Activated CD4-positive, alpha-beta T cell treated with anti-CD3 and anti-CD28 coated beads for 36 hours (primary cell): ENCODE measurements at regions of chr7 and their contacts with region 1.

Region 1: DNA sequence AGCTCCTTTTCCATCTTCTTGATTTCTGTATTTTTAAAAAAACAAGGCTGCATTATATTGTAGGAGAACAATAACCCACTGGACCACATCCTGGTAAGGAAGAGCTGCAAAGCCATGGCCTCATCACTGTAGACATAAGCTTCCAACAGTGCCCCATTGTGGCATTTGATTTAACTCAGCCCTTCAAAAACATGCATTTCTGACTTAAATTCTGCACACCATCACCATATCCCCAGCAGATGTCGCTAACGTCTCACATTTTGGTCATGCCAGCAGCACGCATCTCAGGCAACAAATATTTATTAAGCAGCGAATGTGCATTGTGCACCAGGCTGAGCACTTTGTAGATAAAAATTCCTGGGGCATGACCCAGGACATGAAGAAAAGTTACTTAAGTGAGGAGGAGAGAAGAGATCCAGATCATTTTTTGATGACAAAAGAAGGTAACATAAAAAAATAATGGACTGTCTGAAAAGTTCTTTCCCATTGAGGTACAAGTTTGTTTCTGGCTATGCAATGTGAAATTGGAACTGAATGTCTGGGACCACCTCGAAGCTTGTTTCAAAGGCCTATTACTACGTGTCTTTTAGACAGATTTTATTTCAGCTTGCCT is 164.6 kb upstream of the CDCA7L start:
- DNase-seq: peak; percentile 78
- ATAC-seq: peak; percentile 93
- H3K4me3 Mint-ChIP-seq: no peak overlapping the region
- H3K27ac Mint-ChIP-seq: no peak overlapping the region
- H3K4me1 Mint-ChIP-seq: no peaks in the 10 kb centered on the region
- H3K27me3 Mint-ChIP-seq: peaks cover 3% of the 10 kb centered on the region

Region 2: DNA sequence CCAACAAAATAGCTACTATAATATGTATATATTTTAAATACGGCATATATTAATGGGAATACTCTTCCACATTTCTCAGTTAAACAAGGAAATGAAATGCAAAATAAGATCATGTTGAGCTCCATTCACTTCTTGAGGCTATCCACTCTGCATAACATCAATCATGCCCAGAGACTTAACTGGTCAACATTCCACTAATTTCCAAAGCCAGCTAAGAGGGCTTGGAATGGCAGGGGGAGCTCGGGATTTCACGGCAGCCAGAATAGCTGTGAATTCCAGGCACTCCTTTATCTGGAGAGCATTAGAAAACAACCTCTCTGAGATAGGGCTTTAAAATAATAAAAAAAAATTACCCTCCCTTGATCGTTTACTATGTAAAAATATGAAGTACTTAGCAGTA is 30.2 kb after region 1 on chr7:
- CTCF ChIA-PET with region 1: interaction called, 10 read pairs
- POLR2A ChIA-PET with region 1: no interaction called
- intact Hi-C with region 1: no loop called
- DNase-seq: no peak
- ATAC-seq: no peak
- H3K4me3 Mint-ChIP-seq: no peak overlapping the region
- H3K27ac Mint-ChIP-seq: no peak overlapping the region
- H3K4me1 Mint-ChIP-seq: no peaks in the 10 kb centered on the region
- H3K27me3 Mint-ChIP-seq: peaks cover 3% of the 10 kb centered on the region

Region 3: DNA sequence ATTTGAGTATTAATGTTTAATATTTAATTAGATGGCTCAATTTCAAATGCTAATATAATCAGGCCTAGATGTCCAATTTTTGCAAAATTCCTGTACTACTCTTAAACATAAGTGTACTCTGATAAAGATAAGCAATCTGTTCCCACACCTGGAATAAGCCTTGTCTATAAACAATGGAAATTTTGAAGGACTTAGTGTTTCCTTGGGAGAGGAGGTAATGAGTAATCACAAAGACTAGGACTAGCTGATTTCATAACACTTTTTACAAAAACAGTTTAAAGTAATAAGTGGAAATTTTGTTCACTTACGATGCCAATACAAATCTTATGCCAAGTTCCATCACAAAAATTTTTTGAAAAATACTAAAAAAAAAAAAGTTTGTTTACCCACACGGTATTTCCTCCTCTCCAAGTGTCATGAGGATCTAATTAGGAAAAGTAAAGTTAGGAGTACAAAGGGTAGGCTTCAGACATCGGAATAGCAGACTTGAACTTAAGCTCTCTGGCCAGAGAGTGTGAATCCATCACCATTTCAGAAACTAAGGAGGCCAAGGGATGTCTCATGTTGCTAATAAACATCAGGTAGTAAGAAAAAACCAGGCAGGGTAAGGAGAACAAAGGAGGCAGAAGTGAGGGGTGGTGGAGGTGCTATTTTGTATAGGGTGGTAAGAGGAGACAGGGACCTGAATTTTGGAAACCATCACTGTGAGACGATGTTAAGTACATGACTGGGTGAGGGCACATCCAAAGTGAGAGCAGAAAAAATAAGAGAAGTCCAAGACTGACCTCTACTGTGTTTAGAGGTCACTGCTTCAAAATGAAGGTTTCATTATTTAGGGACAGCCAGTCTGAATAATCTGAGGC is 185.3 kb after region 1 on chr7:
- CTCF ChIA-PET with region 1: interaction called, 5 read pairs
- POLR2A ChIA-PET with region 1: no interaction called
- intact Hi-C with region 1: loop called (anchors 10 kb)
- DNase-seq: no peak
- ATAC-seq: no peak
- H3K4me3 Mint-ChIP-seq: no peak overlapping the region
- H3K27ac Mint-ChIP-seq: no peak overlapping the region
- H3K4me1 Mint-ChIP-seq: peaks cover 9% of the 10 kb centered on the region
- H3K27me3 Mint-ChIP-seq: peaks cover 4% of the 10 kb centered on the region

Region 4: GRCh38 chr7:22445140-22445743 is 334.9 kb after region 1 on chr7:
- CTCF ChIA-PET with region 1: interaction called, 10 read pairs
- POLR2A ChIA-PET with region 1: no interaction called
- intact Hi-C with region 1: no loop called
- DNase-seq: peak; percentile 10
- ATAC-seq: no peak
- H3K4me3 Mint-ChIP-seq: no peak overlapping the region
- H3K27ac Mint-ChIP-seq: no peak overlapping the region
- H3K4me1 Mint-ChIP-seq: peaks cover 18% of the 10 kb centered on the region
- H3K27me3 Mint-ChIP-seq: peaks cover 18% of the 10 kb centered on the region

Region 5: DNA sequence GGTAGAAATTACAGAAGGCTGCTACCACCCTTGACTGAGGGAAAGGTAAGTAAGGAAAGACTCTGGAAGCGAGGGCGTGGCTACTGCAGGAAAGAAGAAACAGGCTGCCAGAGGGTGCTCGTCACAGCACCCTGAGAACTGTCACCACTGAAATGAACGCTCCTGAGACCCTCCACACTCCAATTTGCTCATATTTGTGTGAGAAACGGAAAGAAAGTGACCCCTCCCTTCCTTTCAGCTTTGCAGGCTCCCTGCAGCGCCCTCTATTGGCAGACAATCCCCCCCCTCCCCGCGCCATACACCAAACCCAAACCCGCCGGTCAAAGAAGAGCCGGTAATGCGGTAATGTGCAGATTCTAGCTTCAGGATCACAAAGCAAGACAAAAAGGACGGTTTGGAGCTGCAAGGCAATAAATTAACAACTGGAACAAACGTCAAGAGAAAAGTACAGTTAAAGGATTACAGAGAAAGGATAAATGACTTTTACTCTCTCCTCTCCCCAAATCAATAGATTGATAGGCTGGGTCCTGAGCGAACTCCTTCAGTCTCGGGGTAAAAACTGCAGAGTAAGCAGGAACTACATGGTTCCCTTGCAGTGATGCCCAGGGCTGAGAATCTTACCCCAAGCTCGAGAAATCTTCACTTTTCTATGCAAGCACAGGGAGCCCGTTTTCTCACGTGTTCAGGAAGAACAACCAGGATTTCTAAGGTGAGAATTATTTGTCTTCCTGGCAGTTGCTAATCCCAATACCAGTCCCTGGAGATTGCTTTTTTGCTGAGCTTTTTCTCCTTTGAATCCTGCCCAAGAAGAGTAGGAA is 342.0 kb after region 1 on chr7:
- CTCF ChIA-PET with region 1: interaction called, 14 read pairs
- POLR2A ChIA-PET with region 1: no interaction called
- intact Hi-C with region 1: no loop called
- DNase-seq: peak; percentile 79
- ATAC-seq: no peak
- H3K4me3 Mint-ChIP-seq: no peak overlapping the region
- H3K27ac Mint-ChIP-seq: no peak overlapping the region
- H3K4me1 Mint-ChIP-seq: peaks cover 5% of the 10 kb centered on the region
- H3K27me3 Mint-ChIP-seq: peaks cover 41% of the 10 kb centered on the region

Region 6: DNA sequence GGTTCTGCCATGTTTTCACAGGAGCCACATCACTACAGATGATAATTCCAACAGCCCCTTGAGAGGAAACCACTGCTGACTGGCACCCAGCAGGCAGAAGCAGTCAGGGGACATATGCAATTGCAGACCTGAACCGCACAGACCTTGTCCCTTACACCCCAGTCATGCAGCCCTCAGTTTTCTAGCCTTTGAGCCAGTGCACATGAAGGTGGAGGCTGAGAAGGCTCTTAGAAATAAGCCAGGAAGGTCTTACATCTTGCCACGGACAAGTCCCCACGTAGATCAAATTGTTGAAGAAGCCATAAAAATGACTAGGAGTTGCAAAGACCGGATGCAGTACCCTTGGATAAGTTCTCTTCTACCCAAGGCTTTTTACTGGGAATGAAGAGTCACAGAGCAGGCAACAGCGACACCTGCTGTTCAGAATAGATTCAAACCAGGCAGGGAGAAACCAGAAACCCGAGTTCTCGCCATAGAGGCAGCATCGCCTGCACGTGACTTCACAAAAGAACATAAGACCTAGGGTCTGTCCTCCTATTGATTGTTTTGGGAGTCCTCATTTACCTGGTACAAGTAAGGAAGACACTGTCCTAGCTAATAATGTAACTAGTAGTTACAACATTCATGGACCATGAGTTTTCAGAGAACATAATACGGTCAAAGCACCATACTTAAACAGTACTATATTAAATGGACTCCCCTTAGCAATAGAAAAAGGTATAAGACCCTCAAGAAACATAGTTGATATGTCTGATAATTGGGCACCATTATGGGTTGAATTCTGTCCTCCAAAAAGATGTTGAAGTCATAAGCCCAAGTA is 378.5 kb after region 1 on chr7:
- CTCF ChIA-PET with region 1: interaction called, 36 read pairs
- POLR2A ChIA-PET with region 1: no interaction called
- intact Hi-C with region 1: loop called (anchors 1 kb)
- DNase-seq: peak; percentile 79
- ATAC-seq: peak; percentile 69
- H3K4me3 Mint-ChIP-seq: no peak overlapping the region
- H3K27ac Mint-ChIP-seq: no peak overlapping the region
- H3K4me1 Mint-ChIP-seq: no peaks in the 10 kb centered on the region
- H3K27me3 Mint-ChIP-seq: peaks cover 4% of the 10 kb centered on the region

Region 7: GRCh38 chr7:22499044-22499443 is 388.7 kb after region 1 on chr7:
- CTCF ChIA-PET with region 1: interaction called, 18 read pairs
- POLR2A ChIA-PET with region 1: no interaction called
- intact Hi-C with region 1: loop called (anchors 1 kb)
- DNase-seq: no peak
- ATAC-seq: no peak
- H3K4me3 Mint-ChIP-seq: no peak overlapping the region
- H3K27ac Mint-ChIP-seq: no peak overlapping the region
- H3K4me1 Mint-ChIP-seq: peaks cover 4% of the 10 kb centered on the region
- H3K27me3 Mint-ChIP-seq: peaks cover 22% of the 10 kb centered on the region